ENCODE measurements at regions of chr10 and their contacts with region 1.

Region 1: DNA sequence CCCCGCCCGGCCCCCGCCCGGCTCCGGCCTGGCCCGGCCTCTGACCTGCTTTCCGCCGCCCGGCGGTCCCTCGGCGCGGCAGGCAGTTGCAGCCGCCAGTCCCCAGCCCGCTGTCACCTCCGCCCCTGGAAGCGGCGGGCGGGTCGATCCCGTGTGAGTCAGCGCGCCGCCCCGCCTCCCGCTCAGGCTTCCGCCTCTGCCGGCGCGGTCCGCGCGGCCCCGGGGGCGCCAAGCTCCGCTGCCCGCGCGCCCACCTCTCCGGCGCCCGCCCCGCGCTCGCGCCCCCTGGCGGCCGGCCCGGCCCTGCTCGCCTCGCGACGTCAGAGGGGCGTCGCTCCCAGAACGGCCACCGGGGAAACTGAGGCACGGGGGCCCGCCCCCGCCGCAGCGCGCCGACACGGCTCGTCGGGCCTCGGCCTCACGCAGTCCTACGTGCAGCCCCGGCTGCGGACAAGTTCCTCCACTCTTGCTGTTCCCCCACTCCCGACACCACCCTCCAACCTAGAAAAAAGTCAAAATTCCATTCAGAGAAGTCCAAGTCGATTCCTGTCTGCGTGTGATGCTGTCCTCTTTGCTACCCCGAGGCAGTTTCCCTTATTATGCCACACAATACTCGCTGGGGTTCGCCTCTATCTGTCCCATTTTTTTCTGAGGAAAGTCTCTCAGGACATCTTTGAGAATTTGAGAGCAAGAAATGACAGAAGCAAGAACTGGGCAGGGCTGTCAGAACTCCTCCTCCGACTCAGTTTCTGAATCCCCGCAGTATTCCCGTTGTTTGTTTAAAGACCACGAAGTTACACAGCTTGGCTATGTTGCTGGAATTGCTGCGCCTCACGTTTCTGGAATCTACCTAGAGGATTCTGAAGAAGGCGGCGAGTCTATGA is at the start of gene DNMBP:
- DNase-seq: peak; percentile 76
- H3K4me3 Mint-ChIP-seq: peak within 1 kb of the TSS; percentile 83
- H3K27ac Mint-ChIP-seq: no peak within 1 kb of the TSS
- H3K4me1 Mint-ChIP-seq: peaks cover 41% of the 10 kb centered on the region
- H3K27me3 Mint-ChIP-seq: peaks cover 45% of the 10 kb centered on the region
- total RNA-seq, gene DNMBP: 1.0 and 1.2 TPM in 2 replicates

Region 2: GRCh38 chr10:98446661-98447221 is 1563.3 kb before region 1 on chr10 and contains the start of gene HPS1:
- intact Hi-C with region 1: loop called (anchors 5 kb)
- DNase-seq: peak; percentile 75
- H3K4me3 Mint-ChIP-seq: peak within 1 kb of the TSS; percentile 90
- H3K27ac Mint-ChIP-seq: peak within 1 kb of the TSS; percentile 81
- H3K4me1 Mint-ChIP-seq: peaks cover 26% of the 10 kb centered on the region
- H3K27me3 Mint-ChIP-seq: peaks cover 14% of the 10 kb centered on the region
- total RNA-seq, gene HPS1: 61.2 and 62.0 TPM in 2 replicates

Region 3: DNA sequence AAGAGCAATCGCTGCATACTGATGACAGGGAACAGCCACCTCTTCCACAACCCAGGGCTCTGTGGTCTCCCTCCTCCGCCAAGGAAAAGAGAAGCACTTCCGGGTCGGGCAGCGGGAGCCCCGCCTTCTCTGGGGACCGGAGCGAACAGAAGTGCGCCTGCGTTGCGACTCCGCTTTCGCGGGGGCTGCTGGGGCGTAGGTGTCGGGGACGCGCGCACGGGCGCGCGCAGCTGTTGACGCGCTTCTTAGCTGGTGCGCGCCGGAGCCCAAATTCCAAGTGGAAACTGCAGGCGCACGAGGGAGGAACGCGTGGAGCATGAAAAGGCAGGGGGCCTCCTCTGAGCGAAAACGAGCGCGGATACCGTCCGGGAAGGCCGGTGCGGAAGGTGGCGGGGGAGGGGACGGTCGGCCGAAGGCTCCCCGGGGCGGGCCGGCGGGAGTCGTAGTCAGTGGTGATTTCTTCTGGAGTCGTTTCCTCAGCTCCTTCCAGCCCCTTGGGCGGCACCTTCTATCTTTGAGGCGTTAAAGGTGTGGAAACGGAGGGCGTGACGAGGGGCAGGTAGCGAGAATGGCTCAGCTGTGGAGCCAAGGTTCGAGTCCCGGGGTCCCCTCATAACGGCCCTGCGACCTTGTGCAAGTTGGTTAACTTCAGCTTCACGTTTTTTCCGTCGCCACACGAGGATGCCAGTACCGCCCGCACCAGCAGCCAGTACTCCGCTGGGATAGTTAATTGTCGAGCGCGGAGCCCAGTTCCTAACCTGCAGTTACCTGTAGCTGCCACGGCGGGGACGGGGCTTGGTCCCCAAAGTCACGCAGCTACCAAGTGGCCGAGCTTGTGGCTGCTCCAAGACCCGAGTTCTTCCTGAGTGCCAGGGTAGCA is 277.8 kb before region 1 on chr10 and contains the starts of genes COX15 and CUTC:
- intact Hi-C with region 1: loop called (anchors 5 kb)
- DNase-seq: peak; percentile 94
- H3K4me3 Mint-ChIP-seq: peak within 1 kb of the TSS; percentile 99
- H3K27ac Mint-ChIP-seq: peak within 1 kb of the TSS; percentile 99
- H3K4me1 Mint-ChIP-seq: peaks cover 24% of the 10 kb centered on the region
- H3K27me3 Mint-ChIP-seq: no peaks in the 10 kb centered on the region
- total RNA-seq, gene COX15: 33.9 and 35.2 TPM in 2 replicates
- total RNA-seq, gene CUTC: 34.4 and 35.5 TPM in 2 replicates

Region 4: DNA sequence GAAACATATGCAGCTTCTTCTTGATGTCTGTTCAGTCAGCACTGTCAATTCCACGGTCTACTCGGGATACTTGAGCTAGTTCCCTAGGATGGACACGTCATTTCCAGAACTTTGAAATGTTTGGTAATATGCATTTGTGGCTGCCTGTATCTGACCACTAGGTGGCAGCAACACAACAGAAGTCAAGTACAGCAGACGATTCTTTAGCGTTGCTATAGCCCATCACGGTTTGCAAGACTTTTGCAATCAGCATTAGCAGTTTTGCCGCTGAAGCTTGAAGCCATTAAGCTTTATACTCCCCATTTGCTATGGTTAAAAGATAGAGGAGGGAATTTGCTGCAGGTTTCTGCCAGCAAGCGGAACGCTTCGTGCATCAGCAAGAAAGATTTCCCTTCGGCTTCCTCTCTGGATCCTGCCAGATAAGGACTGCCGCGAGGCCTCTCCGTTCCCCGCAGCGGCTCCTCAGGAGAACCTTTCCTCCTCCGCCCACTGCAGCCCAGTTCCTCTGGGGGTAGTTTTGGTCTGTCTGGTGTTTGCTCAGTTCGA is 164.1 kb before region 1 on chr10:
- intact Hi-C with region 1: loop called (anchors 1 kb)
- DNase-seq: peak; percentile 55
- H3K4me3 Mint-ChIP-seq: no peak overlapping the region
- H3K27ac Mint-ChIP-seq: no peak overlapping the region
- H3K4me1 Mint-ChIP-seq: no peaks in the 10 kb centered on the region
- H3K27me3 Mint-ChIP-seq: peaks cover 8% of the 10 kb centered on the region

Region 5: GRCh38 chr10:99872367-99873162 is 137.5 kb before region 1 on chr10:
- intact Hi-C with region 1: loop called (anchors 5 kb)
- DNase-seq: no peak
- H3K4me3 Mint-ChIP-seq: no peak overlapping the region
- H3K27ac Mint-ChIP-seq: no peak overlapping the region
- H3K4me1 Mint-ChIP-seq: peaks cover 13% of the 10 kb centered on the region
- H3K27me3 Mint-ChIP-seq: peaks cover 77% of the 10 kb centered on the region

Region 6: DNA sequence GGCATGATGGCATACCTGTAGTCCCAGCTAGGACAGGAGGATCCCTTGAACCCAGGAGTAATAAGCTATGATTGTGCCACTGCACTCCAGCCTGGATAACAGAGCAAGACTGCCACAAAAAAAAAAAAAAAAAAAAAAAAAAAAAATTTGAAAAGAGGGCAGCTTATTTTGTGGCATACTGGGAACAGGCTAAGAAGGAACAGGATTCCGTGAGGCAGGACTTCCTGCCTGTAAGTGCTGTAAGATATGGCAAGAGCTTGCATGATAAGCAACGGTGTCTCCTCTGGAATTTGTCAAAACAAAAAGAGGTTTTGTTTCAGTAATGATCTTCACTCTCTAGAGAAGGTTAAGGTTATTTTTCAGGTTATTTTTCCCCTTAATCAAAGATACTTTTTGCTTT is 126.5 kb before region 1 on chr10:
- intact Hi-C with region 1: no loop called
- DNase-seq: no peak
- H3K4me3 Mint-ChIP-seq: no peak overlapping the region
- H3K27ac Mint-ChIP-seq: no peak overlapping the region
- H3K4me1 Mint-ChIP-seq: peaks cover 6% of the 10 kb centered on the region
- H3K27me3 Mint-ChIP-seq: peaks cover 9% of the 10 kb centered on the region

Region 7: DNA sequence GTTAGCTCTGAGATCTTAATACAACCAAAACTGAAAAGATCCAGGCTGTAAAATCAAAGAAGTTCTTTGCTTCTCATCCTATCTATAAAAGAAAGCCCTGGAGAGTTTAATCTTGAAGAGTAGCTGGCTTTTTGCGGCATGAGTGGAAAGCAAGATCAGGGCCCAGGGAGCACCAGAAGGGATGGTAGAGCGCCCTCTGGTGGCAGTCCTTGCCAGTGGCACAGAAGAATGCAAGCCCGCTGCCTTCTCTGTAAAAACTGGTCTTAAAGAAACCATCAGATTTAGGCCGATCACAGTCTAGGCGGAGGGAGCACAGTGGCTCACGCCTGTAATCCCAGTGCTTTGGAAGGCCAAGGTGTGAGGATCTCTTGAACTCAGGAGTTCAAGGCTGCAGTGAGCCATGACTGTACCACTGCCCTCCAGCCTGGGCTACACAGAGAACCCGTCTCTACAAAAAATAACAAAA is 36.0 kb after region 1 on chr10:
- intact Hi-C with region 1: loop called (anchors 1 kb)
- DNase-seq: peak; percentile 59
- H3K4me3 Mint-ChIP-seq: no peak overlapping the region
- H3K27ac Mint-ChIP-seq: no peak overlapping the region
- H3K4me1 Mint-ChIP-seq: peaks cover 2% of the 10 kb centered on the region
- H3K27me3 Mint-ChIP-seq: peaks cover 3% of the 10 kb centered on the region

Region 8: GRCh38 chr10:100254191-100254590 is 244.2 kb after region 1 on chr10:
- intact Hi-C with region 1: no loop called
- DNase-seq: no peak
- H3K4me3 Mint-ChIP-seq: no peak overlapping the region
- H3K27ac Mint-ChIP-seq: no peak overlapping the region
- H3K4me1 Mint-ChIP-seq: peaks cover 1% of the 10 kb centered on the region
- H3K27me3 Mint-ChIP-seq: no peaks in the 10 kb centered on the region